ENCODE measurements at regions of chr14 and their contacts with region 1.

Region 1: GRCh38 chr14:97978341-97978740 is 1181.2 kb downstream of the VRK1 start:
- DNase-seq: peak; percentile 68
- H3K4me3 Mint-ChIP-seq: peak overlapping the region; percentile 91
- H3K27ac Mint-ChIP-seq: peak overlapping the region; percentile 95
- H3K4me1 Mint-ChIP-seq: peaks cover 51% of the 10 kb centered on the region
- H3K27me3 Mint-ChIP-seq: no peaks in the 10 kb centered on the region

Region 2: GRCh38 chr14:97299661-97300060 is 678.7 kb before region 1 on chr14:
- intact Hi-C with region 1: loop called (anchors 10 kb)
- DNase-seq: no peak
- H3K4me3 Mint-ChIP-seq: no peak overlapping the region
- H3K27ac Mint-ChIP-seq: no peak overlapping the region
- H3K4me1 Mint-ChIP-seq: peaks cover 32% of the 10 kb centered on the region
- H3K27me3 Mint-ChIP-seq: peaks cover 13% of the 10 kb centered on the region

Region 3: DNA sequence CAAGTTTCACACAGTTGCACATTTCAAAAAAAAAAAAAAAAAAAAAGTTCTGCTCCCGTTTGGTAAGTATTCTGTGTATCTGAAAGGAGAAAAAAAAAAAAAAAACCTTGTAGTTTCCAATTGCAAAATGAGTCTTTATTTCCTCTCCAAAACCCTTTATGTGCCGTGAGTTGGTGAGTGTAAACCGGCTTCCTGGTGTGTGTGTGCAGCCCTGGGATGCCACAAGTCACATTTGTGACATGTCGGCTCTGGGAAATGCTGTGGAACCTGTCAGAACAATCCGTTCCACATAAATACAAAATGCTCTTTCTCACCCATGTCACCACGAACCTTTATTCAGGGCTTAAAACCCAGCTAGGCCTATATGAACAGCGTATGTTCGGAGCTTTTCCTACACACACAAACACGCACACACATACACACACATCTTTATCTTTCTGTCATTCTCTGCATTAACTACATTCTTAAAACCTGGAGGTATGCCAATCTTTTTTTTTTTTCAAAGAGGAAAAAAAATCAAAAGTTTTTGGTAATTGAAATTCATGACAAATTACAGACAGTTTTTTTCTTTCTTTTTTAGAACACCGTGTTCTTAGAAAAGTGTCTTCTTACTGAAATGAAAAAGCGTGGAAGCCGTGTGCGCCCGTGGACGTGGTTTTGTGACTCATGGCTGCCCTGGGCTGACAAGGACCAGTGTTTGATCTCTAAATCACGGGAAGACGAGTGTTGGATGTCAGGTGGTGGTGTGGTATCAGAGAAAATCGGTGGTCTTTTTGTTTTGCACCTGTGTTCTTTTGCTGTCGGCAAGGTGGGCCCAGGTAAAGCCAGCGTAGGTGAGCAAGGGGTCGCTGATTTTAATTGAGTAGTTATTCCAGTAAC is 569.2 kb before region 1 on chr14:
- intact Hi-C with region 1: loop called (anchors 5 kb)
- DNase-seq: peak; percentile 56
- H3K4me3 Mint-ChIP-seq: peak overlapping the region; percentile 64
- H3K27ac Mint-ChIP-seq: peak overlapping the region; percentile 92
- H3K4me1 Mint-ChIP-seq: peaks cover 32% of the 10 kb centered on the region
- H3K27me3 Mint-ChIP-seq: no peaks in the 10 kb centered on the region

Region 4: GRCh38 chr14:97724265-97724731 is 254.0 kb before region 1 on chr14:
- intact Hi-C with region 1: loop called (anchors 10 kb)
- DNase-seq: peak; percentile 31
- H3K4me3 Mint-ChIP-seq: peak overlapping the region; percentile 72
- H3K27ac Mint-ChIP-seq: peak overlapping the region; percentile 95
- H3K4me1 Mint-ChIP-seq: peaks cover 58% of the 10 kb centered on the region
- H3K27me3 Mint-ChIP-seq: no peaks in the 10 kb centered on the region

Region 5: DNA sequence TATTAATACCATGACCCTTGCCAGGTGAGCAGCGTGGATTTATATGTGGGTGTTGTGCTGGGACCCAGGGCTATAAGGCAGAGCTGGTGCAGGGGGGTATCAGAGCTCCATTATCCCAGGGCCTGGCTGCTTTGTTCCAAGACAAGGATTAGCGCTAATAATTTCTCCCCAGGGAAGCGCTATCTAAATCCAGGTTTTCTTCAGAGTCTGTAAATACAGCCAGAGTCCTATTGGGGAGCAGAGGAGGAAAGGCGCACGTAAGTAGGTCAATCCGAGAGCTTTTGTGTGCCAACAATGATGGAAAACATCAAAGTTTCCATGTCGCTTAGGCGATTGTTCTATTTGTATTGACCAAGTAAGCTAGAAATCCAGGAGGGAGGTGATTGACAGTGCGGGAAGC is 171.4 kb before region 1 on chr14:
- intact Hi-C with region 1: no loop called
- DNase-seq: no peak
- H3K4me3 Mint-ChIP-seq: no peak overlapping the region
- H3K27ac Mint-ChIP-seq: no peak overlapping the region
- H3K4me1 Mint-ChIP-seq: no peaks in the 10 kb centered on the region
- H3K27me3 Mint-ChIP-seq: peaks cover 21% of the 10 kb centered on the region

Region 6: GRCh38 chr14:97994020-97994531 is 15.7 kb after region 1 on chr14:
- intact Hi-C with region 1: loop called (anchors 1 kb)
- DNase-seq: peak; percentile 25
- H3K4me3 Mint-ChIP-seq: no peak overlapping the region
- H3K27ac Mint-ChIP-seq: peak overlapping the region; percentile 85
- H3K4me1 Mint-ChIP-seq: peaks cover 36% of the 10 kb centered on the region
- H3K27me3 Mint-ChIP-seq: no peaks in the 10 kb centered on the region

Region 7: DNA sequence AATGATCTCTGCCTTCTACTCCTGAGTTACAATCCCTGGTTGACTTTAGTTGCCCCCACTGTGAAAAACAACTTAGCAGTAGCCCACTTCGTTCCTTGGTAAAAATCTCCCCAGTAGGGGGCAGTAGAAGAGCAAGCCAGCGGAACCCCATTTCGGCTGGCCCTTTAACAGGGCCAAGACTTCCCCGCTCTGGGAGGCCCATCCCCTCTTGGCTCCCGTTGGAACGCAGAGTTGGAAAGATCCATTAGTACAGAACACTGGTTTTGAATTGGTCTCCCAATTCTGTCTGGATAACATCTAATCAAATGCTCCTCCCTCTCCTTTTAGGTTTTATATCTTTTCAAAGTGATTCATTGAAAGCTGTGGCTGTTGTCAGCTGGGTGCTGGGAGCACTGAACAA is 160.3 kb after region 1 on chr14:
- intact Hi-C with region 1: loop called (anchors 2 kb)
- DNase-seq: peak; percentile 62
- H3K4me3 Mint-ChIP-seq: peak overlapping the region; percentile 53
- H3K27ac Mint-ChIP-seq: peak overlapping the region; percentile 61
- H3K4me1 Mint-ChIP-seq: peaks cover 76% of the 10 kb centered on the region
- H3K27me3 Mint-ChIP-seq: no peaks in the 10 kb centered on the region

Region 8: GRCh38 chr14:98234208-98234607 is 255.9 kb after region 1 on chr14:
- intact Hi-C with region 1: loop called (anchors 5 kb)
- DNase-seq: no peak
- H3K4me3 Mint-ChIP-seq: no peak overlapping the region
- H3K27ac Mint-ChIP-seq: no peak overlapping the region
- H3K4me1 Mint-ChIP-seq: peaks cover 43% of the 10 kb centered on the region
- H3K27me3 Mint-ChIP-seq: no peaks in the 10 kb centered on the region

Measured in activated T-helper 2 cell treated with anti-CD3 and anti-CD28 coated beads, Interferon-gamma antibody, Interleukin-2, Interleukin-4, amounts not matched to agents 10 μg/mL and 5 μg/mL and 100 μg/mL, durations not matched to agents 14 hours and 24 hours and 36 hours (primary cell).